ENCODE measurements at regions of chr19 and their contacts with region 1.

Region 1: GRCh38 chr19:42396381-42397262 is 6.5 kb upstream of the CNFN start:
- DNase-seq: peak; percentile 98 to 99
- ATAC-seq: peak; percentile 95 to 98 (median 97)
- H3K4me3 ChIP-seq: peak overlapping the region; percentile 41 to 71 (median 60)
- H3K27ac ChIP-seq: peak overlapping the region in 9 of 10 donors; percentile 75 to 86 (median 80)
- H3K4me1 ChIP-seq: peaks cover 8 to 32% (median 27%) of the 10 kb centered on the region in 9 donors
- H3K27me3 ChIP-seq: peaks cover 0 to 3% (median 0%) of the 10 kb centered on the region in 7 donors
- CTCF ChIP-seq: no peak

Region 2: DNA sequence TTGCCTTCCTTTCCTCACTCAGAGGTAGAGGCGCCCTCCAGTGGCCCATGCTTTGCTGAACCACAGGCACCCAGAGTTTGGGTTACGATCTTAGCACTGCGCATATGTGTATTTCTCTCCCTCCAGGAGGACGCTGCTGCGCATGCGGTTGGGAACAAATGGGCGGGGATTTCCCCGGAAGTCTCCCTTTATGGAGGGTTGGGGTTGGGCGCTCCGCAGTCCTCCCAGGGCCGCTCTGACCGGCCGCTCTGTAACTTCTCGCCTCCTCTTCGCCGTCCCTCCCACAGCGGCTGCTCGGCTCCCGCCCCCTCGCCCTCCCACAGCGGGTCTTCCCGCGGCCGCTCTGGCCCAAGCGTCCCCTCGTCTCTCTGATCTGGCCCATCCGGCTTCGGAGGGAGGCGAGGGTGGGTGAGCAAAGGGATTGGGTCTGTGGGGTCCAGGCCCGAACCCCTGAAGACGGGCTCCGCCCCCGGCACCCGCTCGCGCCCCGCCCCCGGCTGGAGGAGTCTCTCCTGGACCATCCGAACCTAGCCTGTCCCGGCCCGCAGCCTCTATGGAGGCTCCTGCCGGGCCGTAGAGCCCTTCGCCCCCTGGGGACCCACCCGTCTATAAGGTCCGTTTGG is 71.2 kb before region 1 on chr19 and contains the start of gene MEGF8:
- intact Hi-C with region 1: loop called in 1 of 10 experiments (anchors 1 kb)
- DNase-seq: peak; percentile 98
- ATAC-seq: peak; percentile 98 to 99 (median 98)
- H3K4me3 ChIP-seq: peak within 1 kb of the TSS; percentile 72 to 96 (median 84)
- H3K27ac ChIP-seq: peak within 1 kb of the TSS; percentile 51 to 90 (median 84)
- H3K4me1 ChIP-seq: peaks cover 9 to 36% (median 29%) of the 10 kb centered on the region in 9 donors
- H3K27me3 ChIP-seq: peaks cover 12 to 35% (median 26%) of the 10 kb centered on the region in 7 donors
- CTCF ChIP-seq: peak; percentile 69 to 96 (median 86)
- total RNA-seq, gene MEGF8: 33.4 to 44.6 (median 40.4) TPM

Region 3: DNA sequence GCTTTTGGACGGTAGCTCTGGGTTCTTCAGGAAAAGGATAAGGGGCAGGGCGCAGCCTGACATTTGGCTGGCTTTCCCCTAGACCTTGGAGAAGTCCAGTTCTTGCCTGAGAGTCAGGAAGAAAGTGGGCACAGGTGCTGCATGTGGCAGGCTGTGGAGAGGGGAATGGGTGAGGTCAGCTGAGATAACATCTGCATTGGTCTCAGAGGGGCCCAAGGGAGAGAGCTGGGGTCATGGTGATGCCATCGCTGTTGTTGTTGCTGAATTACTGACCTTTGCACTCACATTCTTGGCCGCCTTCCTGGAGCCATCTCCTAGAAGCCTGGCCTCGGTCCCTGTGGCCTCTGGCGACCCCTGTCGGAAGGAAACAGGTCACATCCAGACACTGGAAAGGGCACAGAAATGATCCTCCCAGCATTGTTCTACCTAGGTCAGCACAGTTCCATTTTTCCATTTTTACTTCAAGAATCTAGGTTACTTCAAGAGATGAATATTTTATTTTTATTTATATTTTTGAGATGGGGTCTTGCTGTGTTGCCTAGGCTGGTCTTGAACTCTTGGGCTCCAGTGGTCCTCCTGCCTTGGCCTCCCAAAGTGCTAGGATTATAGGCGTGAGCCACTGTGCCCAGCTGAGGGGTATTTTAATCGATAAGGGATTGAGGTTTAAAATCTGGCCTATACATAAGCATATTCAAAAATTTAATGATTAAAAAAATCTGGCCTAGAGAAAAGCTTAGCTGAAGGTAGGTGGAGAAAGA is 37.1 kb after region 1 on chr19:
- intact Hi-C with region 1: loop called in 2 of 10 experiments (anchors 5 kb)
- DNase-seq: peak; percentile 86 to 92
- ATAC-seq: peak; percentile 89 to 95 (median 92)
- H3K4me3 ChIP-seq: peak overlapping the region in 1 of 10 donors; percentile 11
- H3K27ac ChIP-seq: peak overlapping the region; percentile 46 to 89 (median 62)
- H3K4me1 ChIP-seq: peaks cover 6 to 50% (median 20%) of the 10 kb centered on the region in 9 donors
- H3K27me3 ChIP-seq: no peaks in the 10 kb centered on the region
- CTCF ChIP-seq: peak; percentile 49 to 84 (median 77)

Region 4: DNA sequence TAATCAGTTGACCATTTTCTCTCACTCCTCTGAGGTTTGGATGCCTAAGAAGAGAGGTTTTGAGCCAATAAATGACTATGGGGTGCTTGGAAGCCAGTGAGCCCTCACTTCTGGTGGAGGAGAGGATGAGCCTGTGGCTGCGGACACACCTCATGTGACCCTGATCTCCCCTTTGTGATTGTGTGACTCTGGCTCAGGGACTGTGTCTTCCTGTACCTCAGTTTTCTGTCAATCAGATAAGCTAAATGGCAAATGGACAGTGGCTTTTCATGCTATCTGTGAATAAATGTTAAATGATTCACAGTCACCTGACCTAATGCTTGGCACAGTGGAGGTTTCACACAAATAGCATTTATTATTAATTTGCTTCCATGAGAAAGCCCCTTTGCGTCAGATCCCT is 366.2 kb after region 1 on chr19:
- intact Hi-C with region 1: no loop called
- DNase-seq: no peak
- ATAC-seq: no peak
- H3K4me3 ChIP-seq: no peak overlapping the region
- H3K27ac ChIP-seq: no peak overlapping the region
- H3K4me1 ChIP-seq: no peaks in the 10 kb centered on the region
- H3K27me3 ChIP-seq: peaks cover 0 to 5% (median 0%) of the 10 kb centered on the region in 7 donors
- CTCF ChIP-seq: no peak

Measured in heart right ventricle (tissue), 16 donors.